CD4-positive, alpha-beta memory T cell (primary cell): ENCODE measurements at regions of chr17 and their contacts with region 1.

Region 1: DNA sequence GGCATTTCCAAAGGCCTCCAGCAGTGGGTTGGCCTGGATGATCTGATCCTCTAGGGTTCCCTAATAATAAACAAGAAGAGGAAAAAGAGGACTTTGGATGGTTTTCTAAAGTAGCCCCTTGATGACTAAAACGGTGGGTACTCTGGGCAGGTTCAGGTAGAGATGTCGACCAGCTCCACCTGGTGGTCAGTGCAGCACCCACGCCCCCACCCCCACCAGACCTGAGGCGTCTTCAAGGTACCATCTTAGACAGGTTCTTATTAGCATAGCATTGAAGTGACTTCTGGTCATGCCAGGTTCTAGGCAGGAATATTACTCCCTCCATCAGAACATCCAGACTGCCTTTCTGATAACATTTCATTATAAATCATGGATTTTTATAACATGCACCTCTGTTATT is 15.0 kb downstream of the MYH13 start:
- DNase-seq: peak in 1 of 5 donors; percentile 1
- H3K4me3 ChIP-seq: no peak overlapping the region
- H3K4me3 Mint-ChIP-seq: no peak overlapping the region
- H3K27ac ChIP-seq: no peak overlapping the region
- H3K27ac Mint-ChIP-seq: no peak overlapping the region
- H3K4me1 ChIP-seq: no peaks in the 10 kb centered on the region
- H3K4me1 Mint-ChIP-seq: no peaks in the 10 kb centered on the region
- H3K27me3 ChIP-seq: no peaks in the 10 kb centered on the region
- H3K27me3 Mint-ChIP-seq: no peaks in the 10 kb centered on the region

Region 2: GRCh38 chr17:9924735-9925191 is 433.0 kb before region 1 on chr17:
- CTCF ChIA-PET with region 1: no interaction called
- POLR2A ChIA-PET with region 1: no interaction called
- intact Hi-C with region 1: loop called (anchors 10 kb)
- DNase-seq: peak in 4 of 5 donors; percentile 26 to 45 (median 38)
- H3K4me3 ChIP-seq: no peak overlapping the region
- H3K4me3 Mint-ChIP-seq: no peak overlapping the region
- H3K27ac ChIP-seq: no peak overlapping the region
- H3K27ac Mint-ChIP-seq: peak overlapping the region in 1 of 7 donors; percentile 82
- H3K4me1 ChIP-seq: no peaks in the 10 kb centered on the region
- H3K4me1 Mint-ChIP-seq: peaks cover 2 to 6% (median 3%) of the 10 kb centered on the region in 4 donors
- H3K27me3 ChIP-seq: no peaks in the 10 kb centered on the region
- H3K27me3 Mint-ChIP-seq: no peaks in the 10 kb centered on the region